ENCODE measurements at regions of chr4 and their contacts with region 1.

Region 1: DNA sequence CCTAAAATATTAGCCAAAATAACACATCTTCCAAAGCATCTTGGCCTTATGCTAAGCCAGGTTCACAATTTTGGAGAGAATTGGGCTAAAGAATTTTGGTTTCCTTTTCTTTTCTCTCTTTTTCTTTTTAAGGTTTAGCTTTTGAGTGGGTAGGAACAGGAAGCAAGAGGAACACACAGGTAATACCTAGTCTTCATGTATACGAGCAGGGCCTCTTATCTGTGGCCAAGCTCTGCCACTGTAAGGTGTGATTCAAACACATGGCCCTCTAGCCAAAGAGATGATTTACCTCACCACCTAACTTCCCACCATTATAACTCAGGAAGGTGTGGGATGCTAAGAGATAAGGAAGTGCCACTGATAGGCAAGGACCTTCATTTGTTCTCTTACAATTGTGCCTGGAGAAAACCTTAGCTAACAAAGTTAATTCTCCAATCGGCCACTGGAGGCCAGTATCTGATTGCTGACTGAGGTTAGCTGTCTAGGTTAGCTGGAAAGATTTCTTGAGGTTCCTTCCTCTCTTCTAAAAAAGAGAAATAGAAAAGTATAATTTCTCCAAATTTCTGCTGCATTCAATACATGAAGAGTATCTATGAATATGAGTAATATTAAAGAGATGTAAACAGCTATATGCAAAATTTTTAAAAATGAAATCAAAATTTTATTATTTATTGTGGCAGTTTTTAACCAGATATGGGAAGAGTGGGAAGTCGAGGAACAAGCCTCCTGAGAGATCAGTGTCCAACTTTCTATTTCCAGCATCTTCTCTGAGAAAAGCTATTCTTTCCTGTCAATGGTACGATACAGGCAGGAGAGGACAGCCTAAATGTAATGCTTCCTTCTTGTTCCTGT is 30.1 kb upstream of the BBS7 start:
- DNase-seq: peak; percentile 27
- H3K4me3 ChIP-seq: no peak overlapping the region; a peak in 1 of 4 replicates
- H3K27ac ChIP-seq: no peak overlapping the region
- H3K4me1 ChIP-seq: peaks cover 0 to 3% of the 10 kb centered on the region in 2 experiments; a peak in 1 of 4 replicates
- H3K27me3 ChIP-seq: peaks cover 6% of the 10 kb centered on the region; the same call in 1 of the 2 replicates
- CTCF ChIP-seq: peak; percentile 84
- EP300 ChIP-seq: no peak
- RAD21 ChIP-seq: peak; percentile 93

Region 2: GRCh38 chr4:121888134-121888533 is 12.2 kb before region 1 on chr4:
- CTCF ChIA-PET with region 1: interaction called, 10 read pairs
- POLR2A ChIA-PET with region 1: no interaction called
- DNase-seq: no peak
- H3K4me3 ChIP-seq: no peak overlapping the region
- H3K27ac ChIP-seq: no peak overlapping the region
- H3K4me1 ChIP-seq: no peaks in the 10 kb centered on the region
- H3K27me3 ChIP-seq: peaks cover 9% of the 10 kb centered on the region; the same call in 1 of the 2 replicates
- CTCF ChIP-seq: no peak
- EP300 ChIP-seq: no peak
- RAD21 ChIP-seq: no peak

Region 3: DNA sequence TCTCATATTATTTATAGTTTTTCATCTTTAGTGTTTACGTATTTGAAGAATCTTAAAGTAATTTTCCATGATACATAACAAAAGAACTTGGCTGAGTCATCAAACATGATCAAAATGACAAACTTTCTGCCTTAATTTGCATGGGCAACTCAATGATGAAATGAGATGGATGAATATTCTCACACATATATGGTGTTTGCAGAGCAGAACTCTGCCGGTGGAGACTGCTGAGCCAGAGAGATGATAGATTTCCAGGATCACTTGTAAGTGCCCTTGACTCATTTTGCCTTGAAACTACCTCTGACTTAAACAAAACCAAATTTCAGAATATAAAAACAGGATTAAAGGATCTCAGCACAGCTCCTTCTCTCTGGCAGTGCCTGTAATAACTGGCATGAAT is 13.3 kb after region 1 on chr4:
- CTCF ChIA-PET with region 1: interaction called, 19 read pairs
- POLR2A ChIA-PET with region 1: no interaction called
- DNase-seq: no peak
- H3K4me3 ChIP-seq: no peak overlapping the region
- H3K27ac ChIP-seq: no peak overlapping the region
- H3K4me1 ChIP-seq: no peaks in the 10 kb centered on the region
- H3K27me3 ChIP-seq: no peaks in the 10 kb centered on the region; the same call in 1 of the 2 replicates
- CTCF ChIP-seq: no peak
- EP300 ChIP-seq: no peak
- RAD21 ChIP-seq: no peak

Region 4: GRCh38 chr4:121932212-121932974 is 32.0 kb after region 1 on chr4:
- CTCF ChIA-PET with region 1: interaction called, 18 read pairs
- POLR2A ChIA-PET with region 1: no interaction called
- DNase-seq: no peak
- H3K4me3 ChIP-seq: no peak overlapping the region
- H3K27ac ChIP-seq: no peak overlapping the region
- H3K4me1 ChIP-seq: no peaks in the 10 kb centered on the region
- H3K27me3 ChIP-seq: no peaks in the 10 kb centered on the region; the same call in 1 of the 2 replicates
- CTCF ChIP-seq: no peak
- EP300 ChIP-seq: no peak
- RAD21 ChIP-seq: no peak

Region 5: DNA sequence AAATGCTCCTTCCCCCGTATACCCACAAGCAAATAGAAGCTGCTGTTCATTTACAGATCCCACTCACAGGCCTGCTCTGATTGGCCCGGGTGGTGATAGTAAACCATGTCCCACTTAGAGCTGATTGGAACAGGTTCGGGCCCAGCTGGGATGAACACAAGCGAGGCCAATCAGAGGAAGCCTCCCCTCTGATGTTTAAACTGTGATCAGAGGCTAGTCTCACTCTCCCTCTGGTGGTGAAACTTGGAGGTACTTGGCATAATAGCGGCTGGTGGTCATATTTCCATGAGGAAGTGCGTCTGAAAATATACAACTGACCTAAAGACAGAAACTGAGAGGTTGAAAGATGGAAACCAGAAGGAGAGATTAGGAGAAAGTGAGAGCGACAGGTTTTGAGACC is 103.0 kb after region 1 on chr4:
- CTCF ChIA-PET with region 1: interaction called, 32 read pairs
- POLR2A ChIA-PET with region 1: interaction called, 4 read pairs
- DNase-seq: peak; percentile 60
- H3K4me3 ChIP-seq: no peak overlapping the region
- H3K27ac ChIP-seq: no peak overlapping the region
- H3K4me1 ChIP-seq: no peaks in the 10 kb centered on the region; a peak in 1 of 4 replicates
- H3K27me3 ChIP-seq: peaks cover 8% of the 10 kb centered on the region; the same call in 1 of the 2 replicates
- CTCF ChIP-seq: peak; percentile 64
- EP300 ChIP-seq: no peak
- RAD21 ChIP-seq: peak; percentile 62

Region 6: GRCh38 chr4:122577808-122578781 is 677.7 kb after region 1 on chr4:
- CTCF ChIA-PET with region 1: interaction called, 58 read pairs
- POLR2A ChIA-PET with region 1: interaction called, 3 read pairs
- DNase-seq: peak; percentile 50
- H3K4me3 ChIP-seq: no peak overlapping the region; a peak in 1 of 4 replicates
- H3K27ac ChIP-seq: no peak overlapping the region
- H3K4me1 ChIP-seq: no peaks in the 10 kb centered on the region
- H3K27me3 ChIP-seq: no peaks in the 10 kb centered on the region
- CTCF ChIP-seq: peak; percentile 71
- EP300 ChIP-seq: no peak
- RAD21 ChIP-seq: peak; percentile 54